GM12878 (cell line): ENCODE measurements at regions of chr5 and their contacts with region 1.

Region 1: DNA sequence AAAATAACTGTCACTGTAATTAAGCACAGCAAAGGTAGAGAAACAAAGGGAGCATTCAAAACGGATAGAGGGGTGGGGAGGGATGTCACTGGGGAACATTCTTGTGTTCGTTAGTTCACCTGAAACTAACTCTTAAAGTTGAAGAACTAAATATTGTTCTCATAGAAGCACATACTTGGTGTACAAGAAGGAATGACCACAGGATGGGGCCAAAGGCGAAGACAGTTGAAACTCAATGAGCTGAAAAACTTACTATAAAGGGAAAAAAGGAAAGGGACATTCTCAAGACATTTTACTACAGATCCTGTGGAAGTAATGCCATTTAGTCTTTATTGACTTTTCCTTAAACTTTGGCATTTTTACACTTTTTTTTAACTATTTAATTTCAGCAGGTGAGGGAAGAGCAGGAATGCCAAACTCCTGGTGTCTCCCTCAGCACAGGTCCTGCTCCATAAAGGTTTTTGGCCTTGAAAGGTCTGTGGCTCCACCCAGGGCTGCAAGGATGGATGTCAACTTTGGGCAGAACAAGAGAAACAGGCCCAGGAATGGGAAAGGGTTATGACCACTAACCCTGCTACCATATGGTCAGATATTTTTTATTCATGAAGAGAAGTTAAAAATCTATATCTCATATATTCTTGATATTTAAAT is 197.6 kb upstream of the RASA1 start:
- DNase-seq: peak; percentile 59
- ATAC-seq: peak; percentile 86
- H3K4me3 ChIP-seq: no peak overlapping the region
- H3K27ac ChIP-seq: peak overlapping the region; percentile 17; the same call in 1 of the 2 replicates
- H3K4me1 ChIP-seq: peaks cover 17% of the 10 kb centered on the region
- H3K27me3 ChIP-seq: no peaks in the 10 kb centered on the region
- CTCF ChIP-seq: peak; percentile 47 to 62 (median 49); a peak in 4 of 6 replicates
- EP300 ChIP-seq: no peak
- POLR2A ChIP-seq: no peak
- RAD21 ChIP-seq: peak; percentile 90

Region 2: DNA sequence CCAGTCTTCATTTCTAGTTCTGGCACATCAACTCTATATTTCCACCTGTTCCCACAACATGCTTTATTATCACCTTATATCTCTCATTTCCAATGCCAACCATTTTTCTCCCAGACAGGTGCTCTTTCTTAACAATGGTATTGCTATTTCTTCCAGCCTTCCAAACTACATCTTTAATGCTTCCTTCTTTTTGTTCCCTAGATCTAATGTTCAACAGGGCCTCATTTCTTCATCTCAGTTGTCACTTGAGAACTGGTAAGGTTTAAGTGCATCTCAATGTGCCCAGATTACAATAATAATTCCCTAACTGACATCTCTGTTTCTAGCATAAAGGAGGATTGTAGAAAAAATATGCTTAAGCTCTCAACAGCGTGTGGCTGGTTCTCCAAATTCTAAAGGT is 179.7 kb before region 1 on chr5:
- CTCF ChIA-PET with region 1: no interaction called
- POLR2A ChIA-PET with region 1: no interaction called
- RAD21 ChIA-PET with region 1: no interaction called
- SMC1A ChIA-PET with region 1: no interaction called
- in situ Hi-C with region 1: no loop called
- intact Hi-C with region 1: no loop called
- DNase-seq: no peak
- ATAC-seq: no peak
- H3K4me3 ChIP-seq: no peak overlapping the region
- H3K27ac ChIP-seq: no peak overlapping the region
- H3K4me1 ChIP-seq: no peaks in the 10 kb centered on the region
- H3K27me3 ChIP-seq: no peaks in the 10 kb centered on the region
- CTCF ChIP-seq: no peak
- EP300 ChIP-seq: no peak
- POLR2A ChIP-seq: no peak
- RAD21 ChIP-seq: no peak

Region 3: DNA sequence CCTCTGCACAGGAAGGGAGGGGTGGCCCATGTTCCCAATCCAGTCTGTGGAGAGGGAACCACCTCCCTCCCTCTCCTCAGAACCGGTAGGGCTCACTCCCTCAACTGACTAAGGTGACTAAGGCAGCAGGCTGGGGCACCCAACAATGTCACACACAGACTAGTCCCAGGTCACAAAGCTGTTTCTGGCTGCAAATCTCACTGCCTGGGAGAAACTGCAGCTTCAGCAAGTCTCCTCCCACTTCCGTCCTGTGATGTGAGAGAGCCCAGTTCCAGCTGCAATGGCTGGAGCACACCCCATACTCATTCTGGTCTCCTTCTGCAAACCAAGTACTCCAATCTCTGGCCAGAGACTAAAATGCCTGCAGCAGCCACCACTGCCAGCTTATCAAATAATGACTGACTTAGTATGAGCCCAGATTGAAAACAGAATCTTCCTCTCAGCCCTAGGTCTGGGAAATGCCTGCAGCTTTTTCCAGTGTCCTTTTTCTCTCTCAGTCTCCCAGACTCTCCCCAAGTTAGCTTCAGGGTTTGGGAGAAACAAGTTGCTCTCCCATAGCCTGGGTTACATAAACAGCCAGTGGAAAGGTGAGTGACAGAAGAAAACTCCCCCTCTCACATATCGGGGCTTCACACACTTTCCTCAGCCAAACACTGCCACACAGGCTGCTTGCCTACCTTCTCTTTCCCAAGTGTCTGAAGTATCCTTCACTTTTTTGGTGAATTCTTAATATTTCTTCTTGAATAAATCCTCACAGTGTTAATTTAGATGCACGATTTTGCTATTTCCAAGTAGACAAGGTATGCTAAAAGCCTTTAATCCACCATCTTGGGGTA is 49.8 kb before region 1 on chr5:
- CTCF ChIA-PET with region 1: no interaction called
- POLR2A ChIA-PET with region 1: no interaction called
- RAD21 ChIA-PET with region 1: interaction called, 11 read pairs
- SMC1A ChIA-PET with region 1: interaction called, 8 read pairs
- in situ Hi-C with region 1: no loop called
- intact Hi-C with region 1: no loop called
- DNase-seq: peak; percentile 47
- ATAC-seq: peak; percentile 94
- H3K4me3 ChIP-seq: peak overlapping the region; percentile 31; the same call in 1 of the 2 replicates
- H3K27ac ChIP-seq: peak overlapping the region; percentile 67
- H3K4me1 ChIP-seq: peaks cover 11% of the 10 kb centered on the region
- H3K27me3 ChIP-seq: no peaks in the 10 kb centered on the region
- CTCF ChIP-seq: no peak
- EP300 ChIP-seq: no peak
- POLR2A ChIP-seq: peak; percentile 53
- RAD21 ChIP-seq: no peak

Region 4: GRCh38 chr5:87103596-87104287 is 33.6 kb after region 1 on chr5:
- CTCF ChIA-PET with region 1: interaction called, 4 read pairs
- POLR2A ChIA-PET with region 1: no interaction called
- RAD21 ChIA-PET with region 1: interaction called, 9 read pairs
- SMC1A ChIA-PET with region 1: interaction called, 11 read pairs
- in situ Hi-C with region 1: no loop called
- intact Hi-C with region 1: loop called (anchors 1 kb)
- DNase-seq: no peak
- ATAC-seq: peak; percentile 96
- H3K4me3 ChIP-seq: no peak overlapping the region
- H3K27ac ChIP-seq: peak overlapping the region; percentile 66
- H3K4me1 ChIP-seq: peaks cover 19% of the 10 kb centered on the region
- H3K27me3 ChIP-seq: no peaks in the 10 kb centered on the region
- CTCF ChIP-seq: no peak
- EP300 ChIP-seq: no peak
- POLR2A ChIP-seq: no peak
- RAD21 ChIP-seq: no peak

Region 5: GRCh38 chr5:87195104-87195591 is 125.0 kb after region 1 on chr5:
- CTCF ChIA-PET with region 1: interaction called, 14 read pairs
- POLR2A ChIA-PET with region 1: interaction called, 7 read pairs
- RAD21 ChIA-PET with region 1: interaction called, 22 read pairs
- SMC1A ChIA-PET with region 1: interaction called, 15 read pairs
- in situ Hi-C with region 1: no loop called
- intact Hi-C with region 1: loop called (anchors 10 kb)
- DNase-seq: peak; percentile 48
- ATAC-seq: peak; percentile 73
- H3K4me3 ChIP-seq: no peak overlapping the region
- H3K27ac ChIP-seq: peak overlapping the region; percentile 63
- H3K4me1 ChIP-seq: peaks cover 35% of the 10 kb centered on the region
- H3K27me3 ChIP-seq: no peaks in the 10 kb centered on the region
- CTCF ChIP-seq: no peak
- EP300 ChIP-seq: 0 out of 4 replicates have a peak, but pooled peaks of 1 of the 2 experiments have one; percentile 46
- POLR2A ChIP-seq: no peak
- RAD21 ChIP-seq: peak; percentile 14; the same call in 1 of the 2 replicates

Region 6: DNA sequence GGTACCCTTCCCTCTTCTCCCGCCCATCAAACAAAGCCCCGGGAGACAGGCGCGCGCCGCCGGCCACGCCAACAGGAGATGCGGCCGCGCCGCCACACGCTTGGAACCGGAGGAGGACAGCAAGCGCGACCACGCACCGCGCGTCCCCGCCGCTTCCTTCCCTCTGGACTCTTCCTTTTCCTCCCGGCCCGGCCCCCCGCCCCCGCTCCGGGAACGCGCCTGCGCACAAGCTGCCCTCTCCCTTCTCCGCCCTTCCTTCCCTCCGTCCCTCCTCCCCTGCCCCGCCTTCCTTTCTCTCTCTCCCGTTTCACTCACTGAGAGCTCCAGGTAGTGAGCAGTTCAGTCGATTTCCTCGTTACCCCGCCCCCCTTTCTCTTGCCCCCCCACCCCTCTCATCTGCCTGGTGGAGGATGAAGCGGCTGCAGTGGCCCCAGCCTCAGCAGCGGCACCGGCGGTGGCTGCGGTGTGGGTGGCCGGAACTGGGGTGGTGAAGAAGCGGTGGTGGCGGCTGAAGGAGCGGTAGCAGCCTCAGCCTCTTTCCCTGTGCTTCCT is 197.6 kb after region 1 on chr5 and contains the start of gene RASA1:
- CTCF ChIA-PET with region 1: interaction called, 17 read pairs
- POLR2A ChIA-PET with region 1: interaction called, 10 read pairs
- RAD21 ChIA-PET with region 1: interaction called, 7 read pairs
- SMC1A ChIA-PET with region 1: interaction called, 16 read pairs
- in situ Hi-C with region 1: no loop called
- intact Hi-C with region 1: loop called (anchors 2 kb)
- DNase-seq: peak; percentile 76
- ATAC-seq: peak; percentile 74
- H3K4me3 ChIP-seq: peak within 1 kb of the TSS; percentile 98
- H3K27ac ChIP-seq: peak within 1 kb of the TSS; percentile 94
- H3K4me1 ChIP-seq: no peaks in the 10 kb centered on the region
- H3K27me3 ChIP-seq: no peaks in the 10 kb centered on the region
- CTCF ChIP-seq: no peak
- EP300 ChIP-seq: no peak
- POLR2A ChIP-seq: peak; percentile 91
- RAD21 ChIP-seq: peak; percentile 30
- polyA plus RNA-seq, gene RASA1: 7.8 to 12.0 TPM

Region 7: GRCh38 chr5:87368601-87369000 is 298.5 kb after region 1 on chr5:
- CTCF ChIA-PET with region 1: interaction called, 4 read pairs
- POLR2A ChIA-PET with region 1: no interaction called
- RAD21 ChIA-PET with region 1: interaction called, 8 read pairs
- SMC1A ChIA-PET with region 1: interaction called, 21 read pairs
- in situ Hi-C with region 1: no loop called
- intact Hi-C with region 1: no loop called
- DNase-seq: no peak
- ATAC-seq: no peak
- H3K4me3 ChIP-seq: no peak overlapping the region
- H3K27ac ChIP-seq: no peak overlapping the region
- H3K4me1 ChIP-seq: no peaks in the 10 kb centered on the region
- H3K27me3 ChIP-seq: no peaks in the 10 kb centered on the region
- CTCF ChIP-seq: no peak
- EP300 ChIP-seq: no peak
- POLR2A ChIP-seq: no peak
- RAD21 ChIP-seq: no peak

Region 8: GRCh38 chr5:87400305-87400899 is 330.3 kb after region 1 on chr5:
- CTCF ChIA-PET with region 1: interaction called, 121 read pairs
- POLR2A ChIA-PET with region 1: interaction called, 3 read pairs
- RAD21 ChIA-PET with region 1: interaction called, 70 read pairs
- SMC1A ChIA-PET with region 1: interaction called, 94 read pairs
- in situ Hi-C with region 1: no loop called
- intact Hi-C with region 1: loop called (anchors 2 kb)
- DNase-seq: no peak
- ATAC-seq: peak; percentile 84
- H3K4me3 ChIP-seq: no peak overlapping the region
- H3K27ac ChIP-seq: no peak overlapping the region
- H3K4me1 ChIP-seq: no peaks in the 10 kb centered on the region
- H3K27me3 ChIP-seq: no peaks in the 10 kb centered on the region
- CTCF ChIP-seq: peak; percentile 39 to 64 (median 41); a peak in 4 of 6 replicates
- EP300 ChIP-seq: no peak
- POLR2A ChIP-seq: no peak
- RAD21 ChIP-seq: peak; percentile 80